Naive thymus-derived CD8-positive, alpha-beta T cell (primary cell): ENCODE measurements at regions of chr10 and their contacts with region 1.

Region 1: GRCh38 chr10:97792141-97792721 is 20.4 kb upstream of the SFRP5 start:
- DNase-seq: peak; percentile 44 to 83 (median 68)
- ATAC-seq: peak; percentile 56 to 80
- H3K4me3 Mint-ChIP-seq: peak overlapping the region in 3 of 10 donors; percentile 10 to 42 (median 22)
- H3K27ac Mint-ChIP-seq: peak overlapping the region in 7 of 10 donors; percentile 15 to 76 (median 65)
- H3K4me1 Mint-ChIP-seq: peaks cover 26 to 63% (median 40%) of the 10 kb centered on the region in 4 donors
- H3K27me3 Mint-ChIP-seq: peaks cover 0 to 2% (median 0%) of the 10 kb centered on the region in 5 donors

Region 2: GRCh38 chr10:97771055-97771811 is 21.0 kb before region 1 on chr10:
- POLR2A ChIA-PET with region 1: interaction called, 12 read pairs
- DNase-seq: peak in 6 of 10 donors; percentile 7 to 61 (median 33)
- ATAC-seq: peak; percentile 80 to 82
- H3K4me3 Mint-ChIP-seq: peak overlapping the region; percentile 80 to 92 (median 88)
- H3K27ac Mint-ChIP-seq: peak overlapping the region in 3 of 10 donors; percentile 28 to 61 (median 56)
- H3K4me1 Mint-ChIP-seq: peaks cover 19 to 51% (median 26%) of the 10 kb centered on the region in 4 donors
- H3K27me3 Mint-ChIP-seq: peaks cover 4 to 23% (median 13%) of the 10 kb centered on the region in 5 donors